Activated naive CD4-positive, alpha-beta T cell treated with anti-CD3 and anti-CD28 coated beads, Interleukin-2, amount 10 ng/mL, durations not matched to agents 7 days and 5 days (primary cell): ENCODE measurements at regions of chr1 and their contacts with region 1.

Region 1: DNA sequence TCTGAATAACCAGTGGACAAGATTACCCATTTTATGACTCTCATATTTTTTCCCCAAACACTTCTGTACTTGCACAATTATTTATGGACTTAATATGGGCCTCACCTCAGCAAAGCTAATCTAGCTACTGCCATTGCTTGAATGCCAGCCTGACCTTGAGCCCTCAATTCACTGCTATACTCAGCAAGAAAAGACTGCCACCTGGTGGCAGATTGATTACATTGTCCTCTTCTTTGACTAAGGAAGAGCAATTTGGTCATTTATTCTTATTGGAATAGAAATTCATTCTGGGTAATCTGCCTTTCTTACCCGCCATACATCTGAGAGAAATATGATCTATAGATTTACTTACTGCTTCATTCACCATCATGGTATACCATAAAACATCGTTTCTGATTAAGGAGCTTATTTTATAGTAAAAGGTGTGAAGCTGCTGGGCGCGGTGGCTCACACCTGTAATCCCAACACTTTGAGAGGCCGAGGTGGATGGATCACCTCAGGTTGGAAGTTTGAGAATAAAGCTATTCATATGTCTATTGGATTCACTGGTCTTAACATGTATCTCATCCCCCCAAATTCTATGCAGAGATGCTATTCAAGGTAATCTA is 32.9 kb upstream of the DIPK1A start:
- DNase-seq: peak; percentile 80
- H3K4me3 Mint-ChIP-seq: no peak overlapping the region
- H3K27ac Mint-ChIP-seq: peak overlapping the region; percentile 66
- H3K4me1 Mint-ChIP-seq: peaks cover 51% of the 10 kb centered on the region
- H3K27me3 Mint-ChIP-seq: peaks cover 10% of the 10 kb centered on the region

Region 2: DNA sequence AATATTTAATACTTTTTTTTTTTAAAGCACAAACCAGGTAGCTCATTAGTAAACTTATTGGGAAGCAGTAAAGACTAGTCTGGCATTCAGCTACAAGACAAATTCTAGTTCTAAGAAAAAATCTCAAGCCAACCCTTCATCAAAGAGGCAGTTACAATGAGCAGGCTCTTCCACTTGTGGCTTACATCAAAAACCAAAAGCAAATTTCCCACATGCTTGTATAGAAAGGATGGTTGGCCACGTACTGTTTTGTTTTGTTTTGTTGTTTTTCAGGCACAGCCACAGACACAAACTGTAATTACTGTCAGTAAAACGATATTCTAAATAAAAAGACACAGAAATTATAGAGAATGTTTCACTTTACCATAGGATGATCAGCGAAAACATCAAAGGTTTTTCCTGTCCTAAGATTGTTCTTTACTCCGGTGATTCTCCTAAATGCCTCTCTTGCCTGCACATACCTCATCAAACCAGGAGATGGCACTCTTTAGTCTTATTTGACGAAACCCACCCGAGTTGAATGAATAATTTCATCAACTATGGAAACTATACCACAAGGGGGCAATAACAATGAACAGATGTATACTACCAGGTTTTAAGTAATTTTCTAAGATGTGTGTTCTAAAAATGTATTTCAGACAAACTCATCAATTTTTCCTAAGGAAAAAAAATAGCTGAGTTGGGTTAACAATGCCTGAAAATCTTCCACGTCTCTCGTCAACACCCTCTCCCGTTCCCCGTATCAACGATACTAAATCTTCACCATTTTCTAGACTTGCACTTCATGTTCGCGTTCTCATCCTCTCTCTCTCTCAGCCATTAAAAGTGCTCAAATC is 135.4 kb before region 1 on chr1:
- CTCF ChIA-PET with region 1: interaction called, 113 read pairs
- DNase-seq: peak; percentile 65
- H3K4me3 Mint-ChIP-seq: peak overlapping the region; percentile 41
- H3K27ac Mint-ChIP-seq: peak overlapping the region; percentile 56
- H3K4me1 Mint-ChIP-seq: peaks cover 38% of the 10 kb centered on the region
- H3K27me3 Mint-ChIP-seq: no peaks in the 10 kb centered on the region

Region 3: DNA sequence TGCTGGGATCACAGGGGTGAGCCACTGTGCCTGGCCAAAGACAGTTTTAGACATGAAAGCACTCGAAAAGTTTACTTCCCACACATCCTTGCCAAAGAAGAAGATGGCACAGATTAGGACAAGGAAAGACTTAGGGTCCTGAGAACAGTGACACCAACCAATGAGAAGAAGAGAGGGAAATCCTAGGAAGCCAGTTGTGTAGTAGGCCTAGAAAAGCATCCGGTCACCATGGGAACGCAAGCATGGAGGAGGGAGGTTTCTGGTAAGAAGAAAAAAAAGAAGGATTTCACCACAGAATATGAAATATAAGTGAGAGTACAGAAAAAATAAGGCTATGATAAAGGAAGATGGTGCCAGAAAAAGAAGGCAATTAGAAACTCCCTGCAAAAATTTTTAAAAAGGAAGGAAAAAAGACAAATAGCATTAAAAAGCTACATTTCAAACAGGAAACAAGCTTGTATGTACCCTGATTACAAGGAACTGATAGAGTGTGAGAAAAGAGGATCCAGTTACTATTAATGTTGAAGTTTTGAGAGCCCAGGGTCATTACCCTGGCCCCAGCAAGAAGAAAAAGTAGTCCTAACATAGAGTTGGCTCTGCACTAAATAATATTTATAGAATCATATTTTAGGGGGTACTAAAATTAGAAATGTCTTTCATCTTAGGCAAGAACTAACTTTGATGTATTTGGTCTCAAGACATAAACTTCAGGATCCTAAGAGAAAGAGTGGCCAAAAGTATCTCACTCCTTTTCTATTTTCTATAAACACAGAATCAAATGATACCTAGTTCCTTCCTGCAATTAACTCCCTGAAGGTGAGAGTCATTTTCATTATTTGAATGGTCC is 49.1 kb before region 1 on chr1:
- CTCF ChIA-PET with region 1: interaction called, 20 read pairs
- DNase-seq: no peak
- H3K4me3 Mint-ChIP-seq: no peak overlapping the region
- H3K27ac Mint-ChIP-seq: no peak overlapping the region
- H3K4me1 Mint-ChIP-seq: peaks cover 43% of the 10 kb centered on the region
- H3K27me3 Mint-ChIP-seq: no peaks in the 10 kb centered on the region

Region 4: GRCh38 chr1:92960395-92961130 is 33.6 kb before region 1 on chr1:
- CTCF ChIA-PET with region 1: interaction called, 375 read pairs
- DNase-seq: peak; percentile 77
- H3K4me3 Mint-ChIP-seq: peak overlapping the region; percentile 88
- H3K27ac Mint-ChIP-seq: peak overlapping the region; percentile 98
- H3K4me1 Mint-ChIP-seq: peaks cover 40% of the 10 kb centered on the region
- H3K27me3 Mint-ChIP-seq: no peaks in the 10 kb centered on the region

Region 5: DNA sequence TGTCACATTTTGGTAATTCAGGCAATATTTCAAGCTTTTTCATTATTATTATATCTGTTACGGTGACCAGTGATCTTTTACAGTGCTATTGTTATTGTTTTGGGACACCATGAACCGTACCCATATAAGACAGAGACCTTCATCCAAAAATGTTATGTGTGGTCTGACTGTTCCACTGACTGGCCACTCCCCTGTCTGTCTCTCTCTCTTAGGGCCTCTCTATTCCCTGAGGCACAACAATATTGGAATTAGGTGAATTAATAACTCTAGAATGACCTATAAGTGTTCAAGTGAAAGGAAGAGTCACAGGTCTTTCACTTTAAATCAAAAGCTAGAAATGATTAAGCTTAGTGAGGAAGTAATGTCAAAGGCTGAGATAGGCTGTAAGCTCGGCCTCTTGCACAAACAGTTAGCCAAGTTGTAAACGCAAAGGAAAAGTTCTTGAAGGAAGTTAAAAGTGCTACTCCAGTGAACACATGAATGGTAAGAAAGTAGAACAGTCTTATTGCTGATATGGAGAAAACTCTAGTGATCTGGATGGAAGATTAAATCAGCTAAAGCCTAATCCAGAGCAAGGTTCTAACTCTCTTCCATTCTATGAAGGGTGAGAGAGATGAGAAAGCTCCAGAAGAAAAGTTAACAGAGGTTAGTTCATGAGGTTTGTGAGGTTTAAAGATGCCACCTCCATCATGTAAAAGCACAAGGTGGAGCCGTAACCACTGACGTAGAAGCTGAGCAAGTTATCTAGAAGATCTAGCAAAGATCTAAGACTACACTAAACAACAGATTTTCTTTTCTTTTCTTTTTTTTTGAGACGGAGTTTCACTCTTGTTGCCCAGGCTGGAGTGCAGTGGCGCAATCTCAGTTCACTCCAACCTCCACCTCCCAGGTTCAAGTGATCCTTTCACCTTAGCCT is 13.2 kb before region 1 on chr1:
- CTCF ChIA-PET with region 1: interaction called, 375 read pairs
- DNase-seq: peak; percentile 71
- H3K4me3 Mint-ChIP-seq: peak overlapping the region; percentile 36
- H3K27ac Mint-ChIP-seq: peak overlapping the region; percentile 99
- H3K4me1 Mint-ChIP-seq: peaks cover 72% of the 10 kb centered on the region
- H3K27me3 Mint-ChIP-seq: no peaks in the 10 kb centered on the region